ENCODE measurements at regions of chr3 and their contacts with region 1.

Region 1: DNA sequence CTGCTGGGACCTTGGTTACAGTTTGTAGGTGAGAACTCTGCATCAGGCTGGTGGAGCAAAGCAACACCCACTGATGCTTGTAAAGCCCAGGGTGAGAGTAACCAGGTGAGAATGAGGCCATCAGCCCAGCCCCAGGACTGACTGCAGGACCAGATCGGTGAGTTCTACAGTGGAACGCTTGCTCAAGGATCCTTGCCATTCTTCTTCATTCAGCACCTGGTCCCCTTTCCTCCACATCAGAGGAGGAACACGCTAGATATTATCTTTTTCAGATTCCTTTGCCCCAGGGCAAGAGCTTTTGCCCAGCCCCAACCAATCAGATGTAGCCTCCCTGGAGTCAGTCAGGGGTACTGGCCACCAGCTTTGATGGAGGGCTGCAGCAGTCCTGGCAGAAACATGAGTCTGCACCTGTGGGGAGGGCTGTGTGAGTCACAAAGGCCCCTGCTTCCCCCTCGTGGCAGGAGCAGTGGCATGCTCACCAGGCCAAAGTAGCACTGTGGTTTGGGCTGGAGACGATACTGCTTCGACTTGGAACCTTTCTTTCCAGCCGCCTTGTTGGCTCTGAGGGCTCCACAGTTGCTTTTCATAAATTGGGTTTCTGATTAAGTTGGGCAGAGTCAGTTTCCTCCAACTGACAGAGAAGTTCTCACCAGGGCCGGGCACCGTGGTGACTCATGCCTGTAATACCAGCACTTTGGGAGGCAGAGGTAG is 3.5 kb upstream of the SHISA5 start:
- DNase-seq: peak; percentile 84
- ATAC-seq: peak; percentile 85
- H3K4me3 Mint-ChIP-seq: no peak overlapping the region
- H3K27ac Mint-ChIP-seq: peak overlapping the region; percentile 90
- H3K4me1 Mint-ChIP-seq: peaks cover 36% of the 10 kb centered on the region
- H3K27me3 Mint-ChIP-seq: no peaks in the 10 kb centered on the region; the same call in none of the 2 replicates
- CTCF ChIP-seq: 0 out of 2 replicates have a peak, but pooled peaks have one; percentile 17

Region 2: DNA sequence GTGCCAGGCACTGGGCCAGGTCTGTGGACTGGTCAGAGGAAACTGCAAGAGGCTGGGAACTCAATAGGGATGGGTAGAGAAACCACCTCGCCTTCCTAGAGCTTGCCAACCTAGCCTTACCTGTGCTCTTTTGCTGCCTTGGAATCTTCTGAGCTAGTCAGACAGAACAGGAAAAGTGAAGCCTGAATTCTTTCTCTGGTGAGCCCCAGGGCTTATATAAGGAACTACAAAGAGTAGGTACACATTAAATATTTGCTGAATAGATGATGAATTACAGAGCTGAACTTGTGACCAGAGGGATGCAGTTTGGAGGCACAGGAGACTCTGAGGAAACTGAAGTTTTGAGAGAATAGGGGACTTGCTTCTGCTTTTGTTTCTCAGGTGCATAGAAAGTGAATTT is 151.1 kb before region 1 on chr3:
- CTCF ChIA-PET with region 1: no interaction called
- POLR2A ChIA-PET with region 1: no interaction called
- DNase-seq: no peak
- ATAC-seq: no peak
- H3K4me3 Mint-ChIP-seq: no peak overlapping the region
- H3K27ac Mint-ChIP-seq: no peak overlapping the region
- H3K4me1 Mint-ChIP-seq: no peaks in the 10 kb centered on the region
- H3K27me3 Mint-ChIP-seq: peaks cover 57% of the 10 kb centered on the region
- CTCF ChIP-seq: no peak

Region 3: GRCh38 chr3:48446425-48447193 is 60.9 kb before region 1 on chr3 and contains the start of gene ATRIP:
- CTCF ChIA-PET with region 1: interaction called, 9 read pairs
- POLR2A ChIA-PET with region 1: interaction called, 10 read pairs
- DNase-seq: peak; percentile 93
- ATAC-seq: peak; percentile 92
- H3K4me3 Mint-ChIP-seq: peak within 1 kb of the TSS; percentile 94
- H3K27ac Mint-ChIP-seq: peak within 1 kb of the TSS; percentile 89
- H3K4me1 Mint-ChIP-seq: peaks cover 26% of the 10 kb centered on the region
- H3K27me3 Mint-ChIP-seq: no peaks in the 10 kb centered on the region
- CTCF ChIP-seq: no peak
- total RNA-seq, gene ATRIP: 15.5 to 18.2 TPM (median 15.6 TPM) in 3 replicates

Region 4: GRCh38 chr3:48465531-48466378 is 41.8 kb before region 1 on chr3:
- CTCF ChIA-PET with region 1: interaction called, 12 read pairs
- POLR2A ChIA-PET with region 1: interaction called, 3 read pairs
- DNase-seq: peak; percentile 92
- ATAC-seq: peak; percentile 94
- H3K4me3 Mint-ChIP-seq: peak overlapping the region; percentile 7
- H3K27ac Mint-ChIP-seq: peak overlapping the region; percentile 97
- H3K4me1 Mint-ChIP-seq: peaks cover 21% of the 10 kb centered on the region
- H3K27me3 Mint-ChIP-seq: no peaks in the 10 kb centered on the region
- CTCF ChIP-seq: no peak

Region 5: DNA sequence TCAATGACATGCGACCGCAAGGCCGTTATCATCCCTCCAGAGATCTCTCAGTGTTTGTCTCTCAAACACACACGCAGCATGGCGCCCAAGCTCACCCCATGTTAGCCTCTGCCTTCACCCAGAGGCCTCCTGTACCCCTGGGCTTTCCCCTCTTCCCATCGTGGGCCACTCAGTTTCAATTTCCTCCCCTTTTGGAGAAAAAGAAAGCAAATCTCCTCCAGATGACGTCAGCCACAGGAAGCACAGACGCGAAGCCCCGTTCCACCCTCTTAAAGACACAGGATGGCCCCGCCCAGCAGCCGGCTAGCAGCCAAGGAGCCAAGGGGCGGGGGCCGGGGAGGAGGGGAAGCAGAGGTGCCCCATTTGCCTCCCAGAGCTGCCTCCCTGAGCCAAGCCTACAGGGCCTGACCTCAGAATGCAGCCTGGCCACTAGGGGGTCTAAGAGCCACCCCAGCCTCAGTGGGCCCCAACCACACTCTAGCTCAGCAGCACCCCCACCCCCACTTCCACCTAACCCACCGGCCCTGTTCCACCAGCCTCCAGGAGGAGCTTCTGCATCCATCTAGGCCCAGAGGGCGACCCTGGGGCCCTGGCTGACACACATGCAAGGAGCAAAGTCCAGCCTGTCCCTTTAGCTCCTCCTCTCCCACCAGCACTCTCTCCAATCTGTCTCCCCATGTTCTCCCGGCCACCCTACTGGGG is 34.4 kb before region 1 on chr3:
- CTCF ChIA-PET with region 1: interaction called, 168 read pairs
- POLR2A ChIA-PET with region 1: interaction called, 21 read pairs
- DNase-seq: peak; percentile 96
- ATAC-seq: peak; percentile 82
- H3K4me3 Mint-ChIP-seq: peak overlapping the region; percentile 91
- H3K27ac Mint-ChIP-seq: peak overlapping the region; percentile 99
- H3K4me1 Mint-ChIP-seq: peaks cover 30% of the 10 kb centered on the region
- H3K27me3 Mint-ChIP-seq: no peaks in the 10 kb centered on the region; the same call in none of the 2 replicates
- CTCF ChIP-seq: peak; percentile 45; the same call in 1 of the 2 replicates

Region 6: GRCh38 chr3:48694610-48695392 is 187.3 kb after region 1 on chr3:
- CTCF ChIA-PET with region 1: no interaction called
- POLR2A ChIA-PET with region 1: no interaction called
- DNase-seq: peak; percentile 20
- ATAC-seq: peak; percentile 26
- H3K4me3 Mint-ChIP-seq: peak overlapping the region; percentile 42
- H3K27ac Mint-ChIP-seq: peak overlapping the region; percentile 94
- H3K4me1 Mint-ChIP-seq: peaks cover 24% of the 10 kb centered on the region
- H3K27me3 Mint-ChIP-seq: no peaks in the 10 kb centered on the region
- CTCF ChIP-seq: no peak